Psoas muscle (tissue), 8 donors: ENCODE measurements at regions of chr1 and their contacts with region 1.

Region 1: DNA sequence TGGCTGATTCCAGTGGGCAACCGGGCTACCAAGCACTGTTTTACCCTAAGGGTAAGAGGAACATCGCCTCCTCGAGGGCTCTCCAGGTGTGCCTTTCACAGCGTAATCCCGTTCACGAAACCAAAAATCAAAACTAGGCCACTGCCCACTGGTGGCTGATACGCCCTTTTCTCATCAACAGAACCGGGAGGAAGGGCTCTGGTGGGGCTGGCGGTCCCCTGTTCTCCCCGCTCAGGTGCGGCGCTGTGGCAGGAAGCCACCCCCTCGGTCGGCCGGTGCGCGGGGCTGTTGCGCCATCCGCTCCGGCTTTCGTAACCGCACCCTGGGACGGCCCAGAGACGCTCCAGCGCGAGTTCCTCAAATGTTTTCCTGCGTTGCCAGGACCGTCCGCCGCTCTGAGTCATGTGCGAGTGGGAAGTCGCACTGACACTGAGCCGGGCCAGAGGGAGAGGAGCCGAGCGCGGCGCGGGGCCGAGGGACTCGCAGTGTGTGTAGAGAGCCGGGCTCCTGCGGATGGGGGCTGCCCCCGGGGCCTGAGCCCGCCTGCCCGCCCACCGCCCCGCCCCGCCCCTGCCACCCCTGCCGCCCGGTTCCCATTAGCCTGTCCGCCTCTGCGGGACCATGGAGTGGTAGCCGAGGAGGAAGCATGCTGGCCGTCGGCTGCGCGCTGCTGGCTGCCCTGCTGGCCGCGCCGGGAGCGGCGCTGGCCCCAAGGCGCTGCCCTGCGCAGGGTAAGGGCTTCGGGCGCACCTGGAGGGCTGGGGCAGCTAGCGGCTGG is at the start of gene IL6R:
- DNase-seq: peak; percentile 97 to 98
- ATAC-seq: peak; percentile 80 to 87 (median 82)
- H3K4me3 ChIP-seq: peak within 1 kb of the TSS; percentile 98
- H3K27ac ChIP-seq: peak within 1 kb of the TSS; percentile 100
- H3K4me1 ChIP-seq: peaks cover 35% of the 10 kb centered on the region
- H3K27me3 ChIP-seq: no peaks in the 10 kb centered on the region
- CTCF ChIP-seq: peak; percentile 20
- total RNA-seq, gene IL6R: 32.6 to 182 (median 80.9) TPM

Region 2: GRCh38 chr1:154418062-154418921 is 13.1 kb after region 1 on chr1:
- intact Hi-C with region 1: loop called in 1 of 2 experiments (anchors 1 kb)
- DNase-seq: peak; percentile 67 to 90
- ATAC-seq: peak; percentile 69 to 73 (median 70)
- H3K4me3 ChIP-seq: peak overlapping the region; percentile 48
- H3K27ac ChIP-seq: peak overlapping the region; percentile 98
- H3K4me1 ChIP-seq: peaks cover 90% of the 10 kb centered on the region
- H3K27me3 ChIP-seq: no peaks in the 10 kb centered on the region
- CTCF ChIP-seq: no peak